CD4-positive, alpha-beta T cell (primary cell): ENCODE measurements at regions of chr6 and their contacts with region 1.

Region 1: GRCh38 chr6:153002607-153003365 is at the start of gene MTRF1L:
- DNase-seq: peak; percentile 60 to 93 (median 76)
- ATAC-seq: peak; percentile 82
- H3K4me3 ChIP-seq: peak within 1 kb of the TSS; percentile 61
- H3K4me3 Mint-ChIP-seq: peak within 1 kb of the TSS; percentile 93
- H3K27ac ChIP-seq: peak within 1 kb of the TSS; percentile 68 to 88
- H3K27ac Mint-ChIP-seq: peak within 1 kb of the TSS; percentile 87
- H3K4me1 ChIP-seq: peaks cover 21% of the 10 kb centered on the region
- H3K4me1 Mint-ChIP-seq: peaks cover 58% of the 10 kb centered on the region
- H3K27me3 ChIP-seq: no peaks in the 10 kb centered on the region
- H3K27me3 Mint-ChIP-seq: no peaks in the 10 kb centered on the region
- CTCF ChIP-seq: peak; percentile 5
- total RNA-seq, gene MTRF1L: 9.3 to 11.2 TPM

Region 2: DNA sequence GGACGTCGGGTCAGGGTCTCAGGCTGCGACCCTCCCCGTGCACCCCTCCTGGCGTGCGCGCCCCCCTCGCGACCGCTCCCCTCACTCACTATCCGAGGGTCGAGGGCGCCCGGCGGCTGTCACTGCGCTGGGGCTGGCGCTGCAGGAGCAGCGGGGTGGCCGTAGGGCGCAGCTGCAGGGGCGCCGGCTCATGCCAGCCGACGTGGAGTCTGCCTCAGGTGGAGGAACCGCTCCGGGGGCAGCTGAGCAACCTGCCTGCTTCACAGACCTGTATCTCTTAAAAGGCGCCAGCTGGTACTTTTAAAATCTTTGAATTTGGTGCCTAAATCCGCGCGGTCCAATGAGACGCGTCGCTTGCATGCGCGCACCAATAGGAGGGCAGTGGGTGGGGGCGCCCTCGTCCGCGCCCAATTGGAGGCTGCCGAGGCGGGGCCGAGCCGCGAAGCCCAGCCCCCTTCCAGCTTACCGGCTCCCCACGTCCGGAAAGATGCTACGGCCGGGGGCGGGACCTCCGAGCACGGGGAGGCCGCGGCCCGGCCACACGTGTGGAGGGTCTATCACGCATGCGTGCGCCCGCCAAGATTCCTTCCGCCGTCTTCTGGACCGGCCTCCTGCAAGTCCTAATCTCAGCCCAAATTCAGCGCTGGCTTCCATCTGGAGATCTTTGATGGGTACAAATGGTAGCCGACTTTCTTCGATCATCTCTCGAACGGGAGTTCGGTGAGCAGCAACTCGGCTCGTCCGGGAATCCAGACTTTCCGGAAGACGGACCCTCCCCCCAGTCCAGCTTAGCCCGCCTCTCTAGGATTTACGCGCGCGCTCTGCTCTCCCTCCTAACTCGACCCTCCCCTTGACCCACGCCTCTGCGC is 19.8 kb before region 1 on chr6 and contains the start of gene FBXO5:
- CTCF ChIA-PET with region 1: no interaction called
- POLR2A ChIA-PET with region 1: interaction called, 5 read pairs
- intact Hi-C with region 1: loop called (anchors 2 kb)
- DNase-seq: peak; percentile 93 to 99 (median 96)
- ATAC-seq: peak; percentile 93
- H3K4me3 ChIP-seq: peak within 1 kb of the TSS; percentile 97
- H3K4me3 Mint-ChIP-seq: peak within 1 kb of the TSS; percentile 99
- H3K27ac ChIP-seq: peak within 1 kb of the TSS; percentile 81 to 93
- H3K27ac Mint-ChIP-seq: peak within 1 kb of the TSS; percentile 98
- H3K4me1 ChIP-seq: peaks cover 34% of the 10 kb centered on the region
- H3K4me1 Mint-ChIP-seq: peaks cover 52% of the 10 kb centered on the region
- H3K27me3 ChIP-seq: no peaks in the 10 kb centered on the region
- H3K27me3 Mint-ChIP-seq: no peaks in the 10 kb centered on the region
- CTCF ChIP-seq: no peak
- total RNA-seq, gene FBXO5: 3.0 to 3.3 TPM

Region 3: DNA sequence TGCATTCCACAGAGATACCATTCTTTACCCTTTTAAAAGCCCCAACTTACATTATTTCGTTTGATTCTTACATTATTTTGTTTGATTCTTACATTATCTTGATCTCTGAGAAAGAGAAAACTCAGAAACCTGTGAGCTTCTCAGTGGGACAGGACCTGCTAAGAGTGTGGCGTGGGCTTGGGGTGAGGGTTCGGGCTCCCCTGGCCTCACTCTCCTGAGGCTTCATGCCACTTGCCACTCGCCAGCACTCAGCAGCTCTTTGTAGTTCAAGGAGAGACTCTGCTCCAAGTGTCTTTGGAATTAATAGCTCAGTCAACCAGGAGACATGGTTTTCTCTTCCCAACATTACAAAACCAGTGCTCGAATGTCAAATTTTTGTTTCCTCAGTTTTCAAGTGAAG is 260.7 kb after region 1 on chr6:
- CTCF ChIA-PET with region 1: no interaction called
- POLR2A ChIA-PET with region 1: no interaction called
- intact Hi-C with region 1: no loop called
- DNase-seq: no peak
- ATAC-seq: no peak
- H3K4me3 ChIP-seq: no peak overlapping the region
- H3K4me3 Mint-ChIP-seq: no peak overlapping the region
- H3K27ac ChIP-seq: no peak overlapping the region
- H3K27ac Mint-ChIP-seq: no peak overlapping the region
- H3K4me1 ChIP-seq: no peaks in the 10 kb centered on the region
- H3K4me1 Mint-ChIP-seq: no peaks in the 10 kb centered on the region
- H3K27me3 ChIP-seq: no peaks in the 10 kb centered on the region
- H3K27me3 Mint-ChIP-seq: peaks cover 3% of the 10 kb centered on the region
- CTCF ChIP-seq: no peak